CD8-positive, alpha-beta T cell (primary cell): ENCODE measurements at regions of chr10 and their contacts with region 1.

Region 1: DNA sequence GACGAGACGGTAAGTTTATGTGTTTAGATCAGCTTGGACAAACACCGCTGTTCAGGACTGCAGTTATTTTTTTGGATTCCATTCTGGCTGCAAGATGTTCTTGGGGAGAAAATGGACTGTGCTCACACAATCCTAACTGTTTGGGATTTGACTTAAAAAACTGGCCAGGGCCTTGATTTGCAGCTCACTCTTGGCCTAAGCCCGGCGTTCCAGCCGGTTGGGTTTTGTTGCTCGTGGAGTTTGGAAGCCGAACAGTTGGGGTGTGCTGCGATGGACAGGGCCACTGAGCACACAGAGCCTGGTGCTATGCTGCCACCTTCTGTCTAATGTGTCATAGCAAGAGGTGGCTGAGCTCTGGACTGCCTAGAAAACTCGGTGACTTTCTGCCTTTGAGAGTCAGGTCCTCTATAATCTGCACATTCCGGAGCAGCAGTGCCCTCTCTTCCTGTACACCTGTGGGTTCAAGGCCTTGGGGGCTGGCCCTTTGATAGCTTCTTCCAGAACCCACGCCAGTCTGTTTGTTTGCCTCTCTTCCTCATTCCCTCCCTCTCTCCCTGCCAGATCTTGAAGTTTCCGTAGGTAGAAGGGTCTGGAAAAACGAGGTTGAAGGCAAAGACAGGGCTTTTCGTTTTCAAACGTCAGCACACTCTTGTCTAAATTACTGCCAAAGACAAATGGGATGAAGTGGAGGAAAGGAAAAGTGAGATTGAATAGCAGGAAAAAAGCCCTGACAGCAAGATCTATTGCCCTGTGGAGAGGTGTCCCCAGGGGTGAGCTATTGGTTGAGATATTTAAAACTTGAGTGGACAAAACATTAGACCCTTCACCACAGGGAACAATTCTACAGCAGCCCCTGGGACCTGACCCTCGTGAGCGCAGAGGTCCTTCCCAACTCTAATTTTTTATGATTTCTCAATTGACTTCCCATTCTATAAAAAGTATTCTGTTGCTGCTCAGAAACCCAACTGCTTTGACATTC is 167.5 kb upstream of the HABP2 start:
- DNase-seq: peak; percentile 30 to 84 (median 61)
- ATAC-seq: peak; percentile 84
- H3K4me3 ChIP-seq: peak overlapping the region in 1 of 2 experiments; percentile 21
- H3K4me3 Mint-ChIP-seq: peak overlapping the region; percentile 57
- H3K27ac ChIP-seq: no peak overlapping the region
- H3K27ac Mint-ChIP-seq: no peak overlapping the region
- H3K4me1 ChIP-seq: peaks cover 17% of the 10 kb centered on the region
- H3K4me1 Mint-ChIP-seq: peaks cover 28% of the 10 kb centered on the region
- H3K27me3 ChIP-seq: no peaks in the 10 kb centered on the region
- H3K27me3 Mint-ChIP-seq: no peaks in the 10 kb centered on the region
- CTCF ChIP-seq: peak; percentile 74

Region 2: GRCh38 chr10:112115799-112116385 is 1269.4 kb before region 1 on chr10:
- CTCF ChIA-PET with region 1: no interaction called
- POLR2A ChIA-PET with region 1: no interaction called
- intact Hi-C with region 1: loop called in 1 of 2 experiments (anchors 10 kb)
- DNase-seq: peak in 6 of 9 experiments; percentile 7 to 49 (median 34)
- ATAC-seq: no peak
- H3K4me3 ChIP-seq: no peak overlapping the region
- H3K4me3 Mint-ChIP-seq: no peak overlapping the region
- H3K27ac ChIP-seq: no peak overlapping the region
- H3K27ac Mint-ChIP-seq: no peak overlapping the region
- H3K4me1 ChIP-seq: no peaks in the 10 kb centered on the region
- H3K4me1 Mint-ChIP-seq: no peaks in the 10 kb centered on the region
- H3K27me3 ChIP-seq: no peaks in the 10 kb centered on the region
- H3K27me3 Mint-ChIP-seq: no peaks in the 10 kb centered on the region
- CTCF ChIP-seq: peak; percentile 58

Region 3: GRCh38 chr10:112471878-112472487 is 913.3 kb before region 1 on chr10:
- CTCF ChIA-PET with region 1: interaction called, 9 read pairs
- POLR2A ChIA-PET with region 1: no interaction called
- intact Hi-C with region 1: loop called in 1 of 2 experiments (anchors 1 kb)
- DNase-seq: peak in 2 of 9 experiments; percentile 54 to 66
- ATAC-seq: peak; percentile 81
- H3K4me3 ChIP-seq: no peak overlapping the region
- H3K4me3 Mint-ChIP-seq: no peak overlapping the region
- H3K27ac ChIP-seq: no peak overlapping the region
- H3K27ac Mint-ChIP-seq: no peak overlapping the region
- H3K4me1 ChIP-seq: no peaks in the 10 kb centered on the region
- H3K4me1 Mint-ChIP-seq: peaks cover 9% of the 10 kb centered on the region
- H3K27me3 ChIP-seq: no peaks in the 10 kb centered on the region
- H3K27me3 Mint-ChIP-seq: no peaks in the 10 kb centered on the region
- CTCF ChIP-seq: peak; percentile 84

Region 4: DNA sequence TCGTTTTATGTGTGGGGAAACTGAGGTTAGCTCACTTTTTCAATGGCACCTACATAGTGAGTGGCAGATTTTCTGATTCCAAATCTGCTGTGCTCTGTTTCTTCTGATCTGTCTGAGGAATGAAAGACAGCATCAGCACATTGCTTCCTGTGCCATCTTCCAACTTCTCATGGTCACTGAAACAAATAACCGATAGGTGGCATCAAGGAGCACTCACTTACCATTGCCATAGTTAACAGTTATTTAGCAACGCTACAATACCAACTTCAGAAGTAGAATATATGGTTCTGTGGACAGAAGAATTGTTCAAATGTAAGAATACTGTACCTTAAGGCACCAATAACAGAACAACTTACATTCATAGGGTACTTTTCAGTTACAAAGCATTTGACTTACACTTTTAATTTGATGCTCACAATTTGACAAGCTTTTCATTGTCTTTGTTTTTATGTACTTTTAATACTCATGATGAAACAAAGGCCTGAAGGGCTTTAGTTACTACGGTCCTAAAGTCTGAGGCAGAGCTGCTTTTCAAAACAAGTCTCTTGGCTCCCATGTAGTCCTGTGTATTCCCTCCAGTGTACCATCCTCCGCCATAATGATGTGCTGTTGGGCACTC is 664.1 kb before region 1 on chr10:
- CTCF ChIA-PET with region 1: interaction called, 53 read pairs
- POLR2A ChIA-PET with region 1: interaction called, 3 read pairs
- intact Hi-C with region 1: loop called (anchors 1 kb)
- DNase-seq: peak in 2 of 9 experiments; percentile 47 to 59
- ATAC-seq: no peak
- H3K4me3 ChIP-seq: no peak overlapping the region
- H3K4me3 Mint-ChIP-seq: no peak overlapping the region
- H3K27ac ChIP-seq: no peak overlapping the region
- H3K27ac Mint-ChIP-seq: no peak overlapping the region
- H3K4me1 ChIP-seq: no peaks in the 10 kb centered on the region
- H3K4me1 Mint-ChIP-seq: no peaks in the 10 kb centered on the region
- H3K27me3 ChIP-seq: no peaks in the 10 kb centered on the region
- H3K27me3 Mint-ChIP-seq: no peaks in the 10 kb centered on the region
- CTCF ChIP-seq: peak; percentile 59

Region 5: GRCh38 chr10:113399065-113399464 is 13.8 kb after region 1 on chr10:
- CTCF ChIA-PET with region 1: interaction called, 10 read pairs
- POLR2A ChIA-PET with region 1: no interaction called
- intact Hi-C with region 1: no loop called
- DNase-seq: no peak
- ATAC-seq: no peak
- H3K4me3 ChIP-seq: no peak overlapping the region
- H3K4me3 Mint-ChIP-seq: no peak overlapping the region
- H3K27ac ChIP-seq: no peak overlapping the region
- H3K27ac Mint-ChIP-seq: no peak overlapping the region
- H3K4me1 ChIP-seq: no peaks in the 10 kb centered on the region
- H3K4me1 Mint-ChIP-seq: no peaks in the 10 kb centered on the region
- H3K27me3 ChIP-seq: no peaks in the 10 kb centered on the region
- H3K27me3 Mint-ChIP-seq: no peaks in the 10 kb centered on the region
- CTCF ChIP-seq: no peak